ENCODE measurements at regions of chr6 and their contacts with region 1.

Region 1: DNA sequence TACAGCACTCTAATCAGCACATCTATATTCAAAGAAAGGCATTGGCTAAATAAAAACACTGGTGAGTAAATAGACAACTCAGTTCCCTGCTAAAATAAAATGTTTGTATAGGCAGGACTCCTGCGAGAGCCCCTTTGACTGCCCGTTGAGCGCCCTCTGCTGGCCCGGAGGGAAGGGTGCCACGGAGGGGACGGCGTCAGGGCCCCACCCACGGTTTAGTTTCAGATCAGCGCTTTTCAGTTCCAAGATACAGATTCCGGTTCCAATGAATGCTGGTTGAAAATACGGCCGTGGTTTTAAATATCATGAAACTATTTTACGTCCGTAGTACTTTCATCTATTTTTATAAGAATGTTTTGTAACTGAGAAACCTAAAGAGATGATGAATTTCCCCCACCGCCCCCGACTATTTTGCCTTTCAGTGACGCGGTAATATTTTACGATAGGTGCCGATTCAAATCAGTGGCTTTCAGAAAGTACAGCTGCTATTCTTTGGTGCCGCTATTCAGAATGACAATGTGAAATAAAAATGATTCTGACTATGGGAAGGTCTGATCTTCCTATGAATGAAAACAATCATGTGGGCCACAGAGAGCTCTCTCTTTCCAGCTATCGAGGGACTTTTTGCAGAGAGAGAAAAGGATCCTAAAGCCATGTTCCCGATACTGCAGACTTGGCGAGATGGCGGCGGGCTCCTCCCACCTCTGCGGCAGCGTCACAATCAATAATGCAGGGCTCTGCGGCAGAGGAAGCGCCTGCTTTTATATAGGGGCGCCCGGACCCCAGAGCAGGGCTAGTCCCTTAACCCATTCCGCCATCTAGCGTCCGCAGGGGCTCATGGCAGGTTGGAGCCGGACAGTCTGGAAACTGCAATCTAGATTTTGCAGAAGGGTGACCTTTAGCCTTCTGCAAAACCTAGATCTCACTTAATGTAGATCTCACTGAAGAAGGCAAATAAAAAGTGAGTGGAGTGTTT is 10.6 kb upstream of the CCN6 start:
- DNase-seq: peak; percentile 94
- H3K4me3 ChIP-seq: peak overlapping the region; percentile 83
- H3K27ac ChIP-seq: peak overlapping the region; percentile 99
- H3K4me1 ChIP-seq: peaks cover 67% of the 10 kb centered on the region
- H3K27me3 ChIP-seq: no peaks in the 10 kb centered on the region

Region 2: GRCh38 chr6:111709615-111710398 is 333.5 kb before region 1 on chr6:
- in situ Hi-C with region 1: loop called (anchors 10 kb)
- DNase-seq: peak; percentile 85
- H3K4me3 ChIP-seq: no peak overlapping the region
- H3K27ac ChIP-seq: no peak overlapping the region
- H3K4me1 ChIP-seq: peaks cover 28% of the 10 kb centered on the region
- H3K27me3 ChIP-seq: no peaks in the 10 kb centered on the region

Measured in GM23248 (cell line).